HEK293T (cell line): ENCODE measurements at regions of chr17 and their contacts with region 1.

Region 1: GRCh38 chr17:59786536-59787319 is 79.3 kb downstream of the VMP1 start:
- DNase-seq: peak; percentile 68

Region 2: GRCh38 chr17:59769891-59770290 is 16.8 kb before region 1 on chr17:
- CTCF ChIA-PET with region 1: interaction called, 3 read pairs
- POLR2A ChIA-PET with region 1: interaction called, 10 read pairs
- DNase-seq: no peak

Region 3: GRCh38 chr17:59804901-59805465 is 18.3 kb after region 1 on chr17:
- CTCF ChIA-PET with region 1: interaction called, 4 read pairs
- POLR2A ChIA-PET with region 1: interaction called, 11 read pairs
- DNase-seq: no peak